CD8-positive, alpha-beta memory T cell (primary cell): ENCODE measurements at regions of chr17 and their contacts with region 1.

Region 1: GRCh38 chr17:59964482-59965328 is at the start of gene RNFT1:
- DNase-seq: peak; percentile 83 to 91 (median 85)
- H3K4me3 ChIP-seq: peak within 1 kb of the TSS; percentile 60
- H3K4me3 Mint-ChIP-seq: peak within 1 kb of the TSS; percentile 89 to 98 (median 94)
- H3K27ac ChIP-seq: peak within 1 kb of the TSS; percentile 88
- H3K27ac Mint-ChIP-seq: peak within 1 kb of the TSS; percentile 90 to 99 (median 97)
- H3K4me1 ChIP-seq: peaks cover 21% of the 10 kb centered on the region
- H3K4me1 Mint-ChIP-seq: peaks cover 21 to 29% (median 24%) of the 10 kb centered on the region in 3 donors
- H3K27me3 ChIP-seq: no peaks in the 10 kb centered on the region
- H3K27me3 Mint-ChIP-seq: no peaks in the 10 kb centered on the region
- total RNA-seq, gene RNFT1: 17.5 to 21.8 TPM

Region 2: GRCh38 chr17:59746849-59747445 is 217.8 kb before region 1 on chr17:
- CTCF ChIA-PET with region 1: no interaction called
- POLR2A ChIA-PET with region 1: no interaction called
- DNase-seq: peak in 1 of 5 donors; percentile 9
- H3K4me3 ChIP-seq: no peak overlapping the region
- H3K4me3 Mint-ChIP-seq: no peak overlapping the region
- H3K27ac ChIP-seq: no peak overlapping the region
- H3K27ac Mint-ChIP-seq: peak overlapping the region in 1 of 8 donors; percentile 67
- H3K4me1 ChIP-seq: no peaks in the 10 kb centered on the region
- H3K4me1 Mint-ChIP-seq: peaks cover 0 to 8% (median under 1%) of the 10 kb centered on the region in 3 donors
- H3K27me3 ChIP-seq: no peaks in the 10 kb centered on the region
- H3K27me3 Mint-ChIP-seq: no peaks in the 10 kb centered on the region

Region 3: DNA sequence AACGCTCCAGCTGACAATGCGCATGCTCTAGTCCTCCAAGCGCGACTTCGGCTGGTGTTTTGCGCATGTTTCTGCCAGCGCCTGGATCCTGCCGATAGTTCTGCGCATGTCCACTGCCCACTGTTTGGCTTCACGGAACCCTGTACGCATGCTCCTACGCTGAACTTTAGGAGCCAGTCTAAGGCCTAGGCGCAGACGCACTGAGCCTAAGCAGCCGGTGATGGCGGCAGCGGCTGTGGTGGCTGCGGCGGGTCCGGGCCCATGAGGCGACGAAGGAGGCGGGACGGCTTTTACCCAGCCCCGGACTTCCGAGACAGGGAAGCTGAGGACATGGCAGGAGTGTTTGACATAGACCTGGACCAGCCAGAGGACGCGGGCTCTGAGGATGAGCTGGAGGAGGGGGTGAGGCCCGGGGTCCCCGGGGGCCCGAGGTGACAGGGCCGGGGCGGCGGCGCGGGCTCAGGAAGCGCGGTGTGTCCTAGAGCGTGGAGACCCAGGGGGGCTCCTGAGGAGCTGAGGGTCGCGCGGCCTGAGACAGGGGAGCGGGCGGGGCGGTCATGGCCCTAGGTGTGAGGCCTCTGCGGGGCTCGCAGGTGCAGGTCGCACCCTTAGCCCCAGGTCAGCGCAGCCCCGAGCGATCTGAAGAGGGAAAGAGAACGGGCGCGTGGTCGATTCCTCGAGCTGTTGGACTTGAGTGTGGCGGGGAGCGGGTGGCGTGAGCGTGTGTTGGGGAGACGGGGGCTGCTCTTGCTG is 71.6 kb before region 1 on chr17 and contains the starts of genes RPS6KB1 and TUBD1:
- CTCF ChIA-PET with region 1: no interaction called
- POLR2A ChIA-PET with region 1: interaction called, 15 read pairs
- DNase-seq: peak; percentile 93 to 99 (median 97)
- H3K4me3 ChIP-seq: peak within 1 kb of the TSS; percentile 95
- H3K4me3 Mint-ChIP-seq: peak within 1 kb of the TSS; percentile 98 to 100 (median 99)
- H3K27ac ChIP-seq: peak within 1 kb of the TSS; percentile 90
- H3K27ac Mint-ChIP-seq: peak within 1 kb of the TSS; percentile 97 to 100 (median 100)
- H3K4me1 ChIP-seq: peaks cover 24% of the 10 kb centered on the region
- H3K4me1 Mint-ChIP-seq: peaks cover 46 to 77% (median 71%) of the 10 kb centered on the region in 3 donors
- H3K27me3 ChIP-seq: no peaks in the 10 kb centered on the region
- H3K27me3 Mint-ChIP-seq: peaks cover 0 to 1% of the 10 kb centered on the region in 2 donors
- total RNA-seq, gene RPS6KB1: 44.5 to 52.3 TPM
- total RNA-seq, gene TUBD1: 9.5 to 11.9 TPM

Region 4: DNA sequence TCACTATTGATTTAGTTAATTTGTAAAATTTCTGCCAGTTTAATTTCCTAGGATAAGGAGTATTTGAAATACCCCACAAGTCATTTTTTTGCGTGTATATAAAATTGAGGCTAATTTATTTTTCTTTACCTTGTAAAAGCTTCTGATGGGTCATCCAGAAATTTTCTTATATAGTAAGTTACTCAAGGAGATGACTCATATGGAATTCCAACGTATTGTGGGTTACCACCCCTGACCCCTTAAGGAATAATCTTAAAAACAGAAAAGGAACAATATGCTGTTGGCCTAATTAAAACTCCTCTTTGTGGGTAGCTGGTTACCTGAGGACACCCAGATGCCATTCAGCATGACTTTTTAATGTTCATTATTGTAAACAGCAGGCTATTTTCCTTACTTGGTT is 100.4 kb after region 1 on chr17:
- CTCF ChIA-PET with region 1: no interaction called
- POLR2A ChIA-PET with region 1: no interaction called
- DNase-seq: no peak
- H3K4me3 ChIP-seq: no peak overlapping the region
- H3K4me3 Mint-ChIP-seq: no peak overlapping the region
- H3K27ac ChIP-seq: no peak overlapping the region
- H3K27ac Mint-ChIP-seq: no peak overlapping the region
- H3K4me1 ChIP-seq: no peaks in the 10 kb centered on the region
- H3K4me1 Mint-ChIP-seq: peaks cover 0 to 4% (median 0%) of the 10 kb centered on the region in 3 donors
- H3K27me3 ChIP-seq: no peaks in the 10 kb centered on the region
- H3K27me3 Mint-ChIP-seq: no peaks in the 10 kb centered on the region